SK-N-SH (cell line): ENCODE measurements at regions of chr20 and their contacts with region 1.

Region 1: GRCh38 chr20:44609511-44610312 is 27.3 kb downstream of the PKIG start:
- DNase-seq: peak; percentile 87
- H3K4me3 ChIP-seq: peak overlapping the region in 1 of 2 experiments; percentile 13; a peak in 1 of 4 replicates
- H3K27ac ChIP-seq: peak overlapping the region; percentile 55 to 65
- H3K4me1 ChIP-seq: peaks cover 0 to 10% of the 10 kb centered on the region in 2 experiments; a peak in 1 of 4 replicates
- H3K27me3 ChIP-seq: no peaks in the 10 kb centered on the region
- CTCF ChIP-seq: peak; percentile 98
- EP300 ChIP-seq: no peak
- RAD21 ChIP-seq: peak; percentile 99

Region 2: GRCh38 chr20:44475694-44476560 is 133.8 kb before region 1 on chr20 and contains the start of gene TTPAL:
- CTCF ChIA-PET with region 1: interaction called, 18 read pairs
- POLR2A ChIA-PET with region 1: no interaction called
- DNase-seq: peak; percentile 97
- H3K4me3 ChIP-seq: peak within 1 kb of the TSS; percentile 81 to 82
- H3K27ac ChIP-seq: peak within 1 kb of the TSS; percentile 72 to 89
- H3K4me1 ChIP-seq: peaks cover 0 to 16% of the 10 kb centered on the region in 2 experiments; a peak in 2 of 4 replicates
- H3K27me3 ChIP-seq: no peaks in the 10 kb centered on the region
- CTCF ChIP-seq: peak; percentile 36
- EP300 ChIP-seq: no peak
- RAD21 ChIP-seq: 0 out of 2 replicates have a peak, but pooled peaks have one; percentile 16
- polyA plus RNA-seq, gene TTPAL: 4.9 and 5.7 TPM in 2 replicates

Region 3: GRCh38 chr20:44495257-44495656 is 114.5 kb before region 1 on chr20:
- CTCF ChIA-PET with region 1: interaction called, 17 read pairs
- POLR2A ChIA-PET with region 1: no interaction called
- DNase-seq: no peak
- H3K4me3 ChIP-seq: no peak overlapping the region
- H3K27ac ChIP-seq: peak overlapping the region in 1 of 2 experiments; percentile 100; a peak in 3 of 4 replicates
- H3K4me1 ChIP-seq: peaks cover 0 to 44% of the 10 kb centered on the region in 2 experiments; a peak in 2 of 4 replicates
- H3K27me3 ChIP-seq: no peaks in the 10 kb centered on the region
- CTCF ChIP-seq: no peak
- EP300 ChIP-seq: no peak
- RAD21 ChIP-seq: no peak

Region 4: GRCh38 chr20:44521484-44522481 is 87.9 kb before region 1 on chr20 and contains the start of gene SERINC3:
- CTCF ChIA-PET with region 1: interaction called, 19 read pairs
- POLR2A ChIA-PET with region 1: interaction called, 4 read pairs
- DNase-seq: peak; percentile 96
- H3K4me3 ChIP-seq: peak within 1 kb of the TSS; percentile 90 to 94
- H3K27ac ChIP-seq: peak within 1 kb of the TSS; percentile 85 to 96
- H3K4me1 ChIP-seq: peaks cover 4 to 11% of the 10 kb centered on the region in 2 experiments; a peak in 3 of 4 replicates
- H3K27me3 ChIP-seq: no peaks in the 10 kb centered on the region
- CTCF ChIP-seq: peak; percentile 48
- EP300 ChIP-seq: no peak
- RAD21 ChIP-seq: peak; percentile 3; the same call in 1 of the 2 replicates
- polyA plus RNA-seq, gene SERINC3: 105 and 173 TPM in 2 replicates

Region 5: GRCh38 chr20:44576297-44576696 is 33.4 kb before region 1 on chr20:
- CTCF ChIA-PET with region 1: interaction called, 17 read pairs
- POLR2A ChIA-PET with region 1: no interaction called
- DNase-seq: no peak
- H3K4me3 ChIP-seq: no peak overlapping the region
- H3K27ac ChIP-seq: peak overlapping the region in 1 of 2 experiments; percentile 58; a peak in 2 of 4 replicates
- H3K4me1 ChIP-seq: peaks cover 16 to 29% of the 10 kb centered on the region in 2 experiments; a peak in 3 of 4 replicates
- H3K27me3 ChIP-seq: no peaks in the 10 kb centered on the region
- CTCF ChIP-seq: peak; percentile 49
- EP300 ChIP-seq: no peak
- RAD21 ChIP-seq: peak; percentile 33; the same call in 1 of the 2 replicates

Region 6: DNA sequence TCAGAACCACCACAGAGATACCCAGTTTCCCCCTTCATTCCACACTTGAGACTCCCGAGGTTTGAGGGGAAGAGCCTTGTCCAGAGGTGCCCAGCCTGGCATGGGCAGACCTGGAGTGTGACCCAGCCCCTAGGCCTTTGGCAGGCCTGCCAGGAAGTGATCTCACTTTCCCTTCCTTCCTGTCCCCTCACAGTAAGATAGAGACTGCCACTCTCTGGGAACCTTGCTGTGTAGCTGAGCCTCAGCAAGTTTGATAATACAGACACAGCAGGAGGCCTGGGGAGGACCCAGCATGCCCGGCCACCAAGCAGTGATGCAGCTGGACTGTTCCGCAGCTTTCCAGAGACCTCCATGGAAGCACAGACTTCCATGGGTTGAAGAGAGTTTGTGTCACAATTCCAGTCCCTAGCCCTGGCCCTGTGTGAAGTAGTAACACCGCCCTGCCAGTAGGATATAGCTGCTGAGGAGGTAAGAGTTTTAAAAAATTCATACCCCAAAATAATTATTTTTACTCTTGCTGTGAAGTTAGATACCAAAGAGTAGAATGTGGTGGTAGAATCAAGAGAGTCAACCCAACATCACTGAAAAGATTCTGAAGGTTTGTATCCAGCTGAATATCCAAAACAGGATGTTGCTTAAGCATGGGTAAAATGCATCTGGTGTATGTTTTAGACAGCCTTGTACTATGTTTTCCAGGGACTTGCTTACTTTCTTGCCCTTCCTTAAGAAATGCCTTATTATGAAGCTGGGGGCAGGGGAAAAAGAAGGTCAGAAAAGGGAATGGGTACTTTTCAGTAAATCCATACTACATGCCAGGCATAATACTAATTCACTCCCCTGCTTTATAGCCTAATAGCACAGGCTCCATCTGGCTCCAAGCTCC is 11.0 kb before region 1 on chr20:
- CTCF ChIA-PET with region 1: interaction called, 26 read pairs
- POLR2A ChIA-PET with region 1: no interaction called
- DNase-seq: peak; percentile 41
- H3K4me3 ChIP-seq: no peak overlapping the region
- H3K27ac ChIP-seq: peak overlapping the region; percentile 43 to 60
- H3K4me1 ChIP-seq: peaks cover 13 to 46% of the 10 kb centered on the region in 2 experiments
- H3K27me3 ChIP-seq: no peaks in the 10 kb centered on the region
- CTCF ChIP-seq: peak; percentile 38
- EP300 ChIP-seq: no peak
- RAD21 ChIP-seq: no peak